PC-9 (cell line): ENCODE measurements at regions of chr6 and their contacts with region 1.

Region 1: DNA sequence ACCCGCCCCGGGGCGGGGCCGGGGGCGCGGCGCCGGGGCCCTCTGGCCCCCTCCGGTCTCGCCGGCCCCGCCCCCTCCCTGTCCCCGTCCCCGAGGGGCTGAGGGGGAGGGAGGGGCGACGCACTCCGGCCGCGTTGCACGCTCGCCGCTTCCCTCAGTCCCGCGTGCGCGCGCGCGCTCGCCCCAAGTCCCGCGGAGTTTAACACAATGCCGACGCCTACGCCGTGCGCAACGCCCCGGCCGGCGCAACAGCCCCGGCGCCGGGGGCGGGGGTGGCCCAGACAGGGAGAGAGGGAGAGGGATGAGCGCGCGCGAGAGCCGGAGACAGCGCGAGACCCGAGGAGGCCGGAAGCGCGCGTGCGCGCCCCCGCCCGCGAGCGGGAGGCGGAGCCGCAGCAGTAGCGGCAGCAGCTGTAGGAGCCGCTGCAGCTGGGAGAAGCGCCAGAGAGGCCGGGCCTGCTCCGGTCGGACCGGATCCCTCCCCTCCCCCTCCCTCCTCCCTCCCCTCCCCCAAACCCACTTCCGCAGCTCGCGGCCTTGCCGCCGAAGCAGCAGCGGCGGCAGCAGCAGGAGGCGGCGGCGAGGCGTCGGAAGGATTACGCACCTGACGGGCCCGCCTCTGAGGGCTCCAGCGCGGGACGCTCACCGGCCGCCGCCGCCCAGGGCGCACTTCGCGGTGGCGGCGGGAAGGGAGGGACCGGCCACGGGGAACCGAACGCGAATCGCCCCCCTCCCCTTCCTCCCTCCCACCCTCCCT is 905 bp downstream of the ZBTB2 start:
- DNase-seq: peak; percentile 91 to 96
- H3K4me3 ChIP-seq: peak overlapping the region; percentile 75; the same call in 1 of the 2 replicates
- H3K27ac ChIP-seq: peak overlapping the region; percentile 98
- H3K4me1 ChIP-seq: peaks cover 49% of the 10 kb centered on the region
- H3K27me3 ChIP-seq: no peaks in the 10 kb centered on the region
- CTCF ChIP-seq: no peak

Region 2: GRCh38 chr6:151323791-151324487 is 66.5 kb before region 1 on chr6:
- CTCF ChIA-PET with region 1: interaction called, 13 read pairs
- POLR2A ChIA-PET with region 1: no interaction called
- intact Hi-C with region 1: no loop called
- DNase-seq: peak; percentile 70 to 74
- H3K4me3 ChIP-seq: peak overlapping the region; percentile 68; the same call in 1 of the 2 replicates
- H3K27ac ChIP-seq: peak overlapping the region; percentile 48
- H3K4me1 ChIP-seq: peaks cover 39% of the 10 kb centered on the region
- H3K27me3 ChIP-seq: no peaks in the 10 kb centered on the region
- CTCF ChIP-seq: peak; percentile 96

Region 3: GRCh38 chr6:151370509-151371078 is 19.9 kb before region 1 on chr6:
- CTCF ChIA-PET with region 1: interaction called, 3 read pairs
- POLR2A ChIA-PET with region 1: interaction called, 27 read pairs
- intact Hi-C with region 1: loop called (anchors 2 kb)
- DNase-seq: no peak
- H3K4me3 ChIP-seq: no peak overlapping the region
- H3K27ac ChIP-seq: no peak overlapping the region
- H3K4me1 ChIP-seq: peaks cover 22% of the 10 kb centered on the region
- H3K27me3 ChIP-seq: no peaks in the 10 kb centered on the region
- CTCF ChIP-seq: no peak; the same call in 1 of the 2 replicates

Region 4: GRCh38 chr6:151379933-151380847 is 10.3 kb before region 1 on chr6:
- CTCF ChIA-PET with region 1: interaction called, 3 read pairs
- POLR2A ChIA-PET with region 1: interaction called, 24 read pairs
- intact Hi-C with region 1: loop called (anchors 2 kb)
- DNase-seq: no peak
- H3K4me3 ChIP-seq: no peak overlapping the region
- H3K27ac ChIP-seq: no peak overlapping the region
- H3K4me1 ChIP-seq: peaks cover 19% of the 10 kb centered on the region
- H3K27me3 ChIP-seq: no peaks in the 10 kb centered on the region
- CTCF ChIP-seq: no peak

Region 5: DNA sequence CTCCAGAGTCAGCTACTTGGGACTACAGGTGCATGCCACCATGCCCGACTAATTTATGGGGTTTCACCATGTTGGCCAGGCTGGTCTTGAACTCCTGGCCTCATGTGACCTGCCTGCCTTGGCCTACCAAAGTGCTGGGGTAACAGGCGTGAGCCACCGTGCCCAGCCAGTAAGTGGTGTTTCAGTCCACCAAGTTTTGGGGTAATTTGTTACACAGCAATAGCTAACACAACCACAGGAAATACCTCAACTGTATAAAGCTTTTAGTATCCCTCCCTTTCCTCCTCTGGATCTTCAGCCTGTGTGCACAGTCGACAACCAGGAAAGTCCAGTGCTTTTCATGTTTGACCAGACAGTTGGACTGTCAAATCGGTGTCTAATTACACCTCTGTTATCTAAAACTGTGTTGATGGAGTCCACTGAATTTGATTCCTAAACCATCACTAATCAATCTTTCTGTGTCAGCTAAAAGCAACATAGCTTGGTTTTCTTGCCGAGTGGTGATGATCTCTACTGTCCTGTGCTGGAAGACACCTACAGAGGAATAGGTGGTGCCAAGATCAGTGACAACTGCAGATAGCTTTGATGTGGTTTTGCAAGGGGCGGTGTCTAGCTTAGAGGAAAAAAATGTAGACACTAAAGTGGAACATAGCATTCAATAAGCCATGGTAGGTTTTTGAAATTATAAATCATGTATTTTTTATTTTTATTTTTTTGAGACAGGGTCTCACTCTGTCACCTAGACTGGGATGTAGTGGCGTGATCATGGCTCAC is 23.1 kb after region 1 on chr6:
- CTCF ChIA-PET with region 1: no interaction called
- POLR2A ChIA-PET with region 1: no interaction called
- intact Hi-C with region 1: no loop called
- DNase-seq: no peak
- H3K4me3 ChIP-seq: no peak overlapping the region
- H3K27ac ChIP-seq: no peak overlapping the region
- H3K4me1 ChIP-seq: no peaks in the 10 kb centered on the region
- H3K27me3 ChIP-seq: no peaks in the 10 kb centered on the region
- CTCF ChIP-seq: no peak

Region 6: DNA sequence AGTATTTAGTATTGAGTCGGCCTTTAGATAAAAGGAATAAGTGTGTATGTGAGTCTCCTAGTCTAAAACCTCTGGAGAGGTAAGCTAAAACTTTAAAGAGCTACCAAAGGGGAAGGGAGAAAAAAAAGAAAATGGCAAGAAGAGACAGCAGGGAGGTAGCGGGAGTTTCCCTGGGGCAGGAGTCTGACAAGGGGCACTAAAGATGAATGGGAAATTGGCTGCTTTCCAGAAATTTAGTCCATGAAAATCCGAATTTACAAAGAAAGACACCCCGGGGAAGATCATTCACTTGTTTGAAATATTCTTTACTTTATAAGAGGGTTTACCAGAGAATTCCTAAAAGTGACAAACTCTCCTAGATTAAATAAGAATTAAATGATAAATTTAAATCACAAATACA is 42.2 kb after region 1 on chr6:
- CTCF ChIA-PET with region 1: no interaction called
- POLR2A ChIA-PET with region 1: no interaction called
- intact Hi-C with region 1: no loop called
- DNase-seq: no peak
- H3K4me3 ChIP-seq: no peak overlapping the region
- H3K27ac ChIP-seq: no peak overlapping the region
- H3K4me1 ChIP-seq: peaks cover 7% of the 10 kb centered on the region
- H3K27me3 ChIP-seq: no peaks in the 10 kb centered on the region
- CTCF ChIP-seq: no peak

Region 7: DNA sequence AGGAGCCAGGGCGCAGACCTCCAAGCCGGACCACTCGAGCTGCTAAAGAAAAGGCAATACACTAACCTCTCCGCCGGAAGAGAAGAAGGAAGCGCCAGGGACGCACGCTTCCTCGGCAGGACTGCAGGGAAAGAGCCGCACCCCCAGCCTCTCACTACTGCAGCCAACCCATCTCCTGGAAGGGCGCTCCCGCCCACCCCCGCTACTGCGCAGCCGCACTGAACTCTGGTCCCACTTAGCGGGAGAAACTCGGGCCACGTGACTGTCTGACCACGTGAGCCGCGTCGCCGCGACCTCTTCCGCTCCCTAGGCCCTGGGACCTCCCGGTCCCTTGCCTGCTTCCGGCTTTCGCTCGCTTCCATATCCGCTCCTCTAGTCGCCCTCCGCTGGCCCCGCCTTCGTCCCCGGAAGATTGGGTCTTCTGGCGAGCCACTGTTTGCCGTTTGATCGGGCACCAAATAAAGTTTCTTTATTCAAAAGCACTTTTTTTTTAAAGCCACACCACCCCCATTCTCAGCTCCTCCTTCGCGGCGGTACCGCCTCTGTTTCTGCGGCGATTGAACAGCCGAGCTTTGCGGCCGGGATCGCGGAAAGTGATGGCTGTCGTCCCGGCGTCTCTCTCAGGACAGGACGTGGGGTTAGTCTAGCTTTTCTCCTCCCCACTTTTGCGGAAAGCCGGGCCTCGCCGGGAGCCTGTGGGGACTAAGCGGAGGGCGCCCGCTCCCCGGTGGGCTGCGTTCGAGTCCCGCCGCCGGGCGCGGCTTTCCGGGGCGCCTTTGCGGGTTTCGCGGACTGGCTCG is 61.7 kb after region 1 on chr6 and contains the start of gene RMND1:
- CTCF ChIA-PET with region 1: no interaction called
- POLR2A ChIA-PET with region 1: no interaction called
- intact Hi-C with region 1: loop called (anchors 1 kb)
- DNase-seq: peak; percentile 97
- H3K4me3 ChIP-seq: peak within 1 kb of the TSS; percentile 83
- H3K27ac ChIP-seq: peak within 1 kb of the TSS; percentile 72
- H3K4me1 ChIP-seq: peaks cover 13% of the 10 kb centered on the region; the same call in 1 of the 2 replicates
- H3K27me3 ChIP-seq: no peaks in the 10 kb centered on the region
- CTCF ChIP-seq: no peak
- total RNA-seq, gene RMND1: 17.6 and 19.3 TPM in 2 replicates

Region 8: GRCh38 chr6:151537556-151537955 is 147.1 kb after region 1 on chr6:
- CTCF ChIA-PET with region 1: no interaction called
- POLR2A ChIA-PET with region 1: interaction called, 10 read pairs
- intact Hi-C with region 1: no loop called
- DNase-seq: no peak
- H3K4me3 ChIP-seq: no peak overlapping the region
- H3K27ac ChIP-seq: no peak overlapping the region
- H3K4me1 ChIP-seq: no peaks in the 10 kb centered on the region
- H3K27me3 ChIP-seq: no peaks in the 10 kb centered on the region
- CTCF ChIP-seq: no peak

Region 9: GRCh38 chr6:152160346-152160745 is 769.9 kb after region 1 on chr6:
- CTCF ChIA-PET with region 1: no interaction called
- POLR2A ChIA-PET with region 1: no interaction called
- intact Hi-C with region 1: no loop called
- DNase-seq: no peak
- H3K4me3 ChIP-seq: no peak overlapping the region
- H3K27ac ChIP-seq: no peak overlapping the region
- H3K4me1 ChIP-seq: no peaks in the 10 kb centered on the region
- H3K27me3 ChIP-seq: no peaks in the 10 kb centered on the region
- CTCF ChIP-seq: no peak